Activated naive CD8-positive, alpha-beta T cell treated with anti-CD3 and anti-CD28 coated beads, Interleukin-2, amount 10 ng/mL, durations not matched to agents 7 days and 5 days (primary cell): ENCODE measurements at regions of chr10 and their contacts with region 1.

Region 1: GRCh38 chr10:128125944-128126764 is at the start of gene MKI67:
- DNase-seq: peak; percentile 88
- ATAC-seq: peak; percentile 93
- H3K4me3 Mint-ChIP-seq: peak within 1 kb of the TSS; percentile 99
- H3K27ac Mint-ChIP-seq: peak within 1 kb of the TSS; percentile 95
- H3K4me1 Mint-ChIP-seq: peaks cover 34% of the 10 kb centered on the region
- H3K27me3 Mint-ChIP-seq: peaks cover 11% of the 10 kb centered on the region
- total RNA-seq, gene MKI67: 256 to 280 TPM

Region 2: GRCh38 chr10:128047351-128047750 is 78.8 kb before region 1 on chr10:
- POLR2A ChIA-PET with region 1: interaction called, 17 read pairs
- DNase-seq: peak; percentile 76
- ATAC-seq: peak; percentile 99
- H3K4me3 Mint-ChIP-seq: peak overlapping the region; percentile 91
- H3K27ac Mint-ChIP-seq: peak overlapping the region; percentile 95
- H3K4me1 Mint-ChIP-seq: peaks cover 33% of the 10 kb centered on the region
- H3K27me3 Mint-ChIP-seq: no peaks in the 10 kb centered on the region

Region 3: GRCh38 chr10:128064108-128064969 is 61.8 kb before region 1 on chr10:
- POLR2A ChIA-PET with region 1: interaction called, 20 read pairs
- DNase-seq: peak; percentile 55
- ATAC-seq: peak; percentile 60
- H3K4me3 Mint-ChIP-seq: peak overlapping the region; percentile 71
- H3K27ac Mint-ChIP-seq: peak overlapping the region; percentile 83
- H3K4me1 Mint-ChIP-seq: peaks cover 72% of the 10 kb centered on the region
- H3K27me3 Mint-ChIP-seq: no peaks in the 10 kb centered on the region

Region 4: GRCh38 chr10:128095027-128095752 is 31.0 kb before region 1 on chr10:
- POLR2A ChIA-PET with region 1: interaction called, 14 read pairs
- DNase-seq: peak; percentile 49
- ATAC-seq: peak; percentile 80
- H3K4me3 Mint-ChIP-seq: peak overlapping the region; percentile 75
- H3K27ac Mint-ChIP-seq: peak overlapping the region; percentile 91
- H3K4me1 Mint-ChIP-seq: peaks cover 46% of the 10 kb centered on the region
- H3K27me3 Mint-ChIP-seq: peaks cover 2% of the 10 kb centered on the region

Region 5: GRCh38 chr10:128451879-128452278 is 325.7 kb after region 1 on chr10:
- POLR2A ChIA-PET with region 1: no interaction called
- DNase-seq: no peak
- ATAC-seq: no peak
- H3K4me3 Mint-ChIP-seq: no peak overlapping the region
- H3K27ac Mint-ChIP-seq: no peak overlapping the region
- H3K4me1 Mint-ChIP-seq: no peaks in the 10 kb centered on the region
- H3K27me3 Mint-ChIP-seq: peaks cover 2% of the 10 kb centered on the region